ENCODE measurements at regions of chr17 and their contacts with region 1.

Region 1: GRCh38 chr17:65988081-65988850 is 203.7 kb downstream of the CEP112 start:
- DNase-seq: peak; percentile 49
- H3K4me3 ChIP-seq: no peak overlapping the region
- H3K27ac ChIP-seq: no peak overlapping the region
- H3K4me1 ChIP-seq: no peaks in the 10 kb centered on the region
- H3K27me3 ChIP-seq: no peaks in the 10 kb centered on the region
- CTCF ChIP-seq: peak; percentile 52

Region 2: GRCh38 chr17:65231662-65232335 is 756.5 kb before region 1 on chr17:
- intact Hi-C with region 1: loop called (anchors 5 kb)
- DNase-seq: peak; percentile 69
- H3K4me3 ChIP-seq: no peak overlapping the region
- H3K27ac ChIP-seq: no peak overlapping the region
- H3K4me1 ChIP-seq: no peaks in the 10 kb centered on the region
- H3K27me3 ChIP-seq: no peaks in the 10 kb centered on the region
- CTCF ChIP-seq: peak; percentile 48

Region 3: GRCh38 chr17:66040402-66040801 is 52.1 kb after region 1 on chr17:
- intact Hi-C with region 1: no loop called
- DNase-seq: no peak
- H3K4me3 ChIP-seq: no peak overlapping the region
- H3K27ac ChIP-seq: no peak overlapping the region
- H3K4me1 ChIP-seq: no peaks in the 10 kb centered on the region
- H3K27me3 ChIP-seq: no peaks in the 10 kb centered on the region
- CTCF ChIP-seq: no peak

Region 4: DNA sequence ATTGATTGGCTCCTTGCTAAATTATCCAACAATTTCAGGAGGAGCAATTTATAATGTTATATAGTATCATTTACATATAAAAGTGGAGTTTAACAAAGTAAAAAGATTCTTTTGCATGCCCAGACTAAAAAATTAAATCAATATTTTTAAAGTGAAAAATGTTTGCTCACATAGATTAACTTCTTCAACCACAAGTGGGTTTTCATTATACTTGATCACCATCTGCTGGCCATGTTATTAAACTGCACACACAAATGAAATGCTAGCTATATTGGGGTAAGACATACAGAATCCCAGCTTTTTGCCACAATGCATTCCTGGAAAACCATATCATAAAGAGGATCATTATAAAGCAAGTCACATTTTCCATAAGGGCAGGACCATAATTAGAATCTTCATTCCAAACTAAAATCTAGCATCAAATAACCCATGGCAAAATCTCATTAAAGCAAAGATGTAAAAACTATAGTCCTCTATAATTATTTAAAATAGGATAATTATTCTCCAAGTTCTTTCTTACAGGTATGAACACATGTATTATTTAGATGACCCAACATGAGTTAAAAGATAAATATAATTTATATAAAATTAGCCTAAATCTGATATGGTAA is 177.4 kb after region 1 on chr17:
- intact Hi-C with region 1: loop called (anchors 10 kb)
- DNase-seq: no peak
- H3K4me3 ChIP-seq: no peak overlapping the region
- H3K27ac ChIP-seq: no peak overlapping the region
- H3K4me1 ChIP-seq: no peaks in the 10 kb centered on the region
- H3K27me3 ChIP-seq: no peaks in the 10 kb centered on the region
- CTCF ChIP-seq: peak; percentile 59

Measured in colonic mucosa (tissue), 4 donors.